GM12878 (cell line): ENCODE measurements at regions of chr19 and their contacts with region 1.

Region 1: GRCh38 chr19:18203863-18204393 is at the start of gene RAB3A:
- DNase-seq: peak; percentile 99
- ATAC-seq: peak; percentile 97
- H3K4me3 ChIP-seq: peak within 1 kb of the TSS; percentile 86
- H3K27ac ChIP-seq: peak within 1 kb of the TSS; percentile 68
- H3K4me1 ChIP-seq: peaks cover 6% of the 10 kb centered on the region
- H3K27me3 ChIP-seq: no peaks in the 10 kb centered on the region
- CTCF ChIP-seq: no peak
- EP300 ChIP-seq: no peak
- POLR2A ChIP-seq: peak; percentile 47; the same call in 1 of the 2 replicates
- RAD21 ChIP-seq: no peak
- polyA plus RNA-seq, gene RAB3A: 0.07 TPM in 1 of 2 experiments, not detected in the other

Region 2: DNA sequence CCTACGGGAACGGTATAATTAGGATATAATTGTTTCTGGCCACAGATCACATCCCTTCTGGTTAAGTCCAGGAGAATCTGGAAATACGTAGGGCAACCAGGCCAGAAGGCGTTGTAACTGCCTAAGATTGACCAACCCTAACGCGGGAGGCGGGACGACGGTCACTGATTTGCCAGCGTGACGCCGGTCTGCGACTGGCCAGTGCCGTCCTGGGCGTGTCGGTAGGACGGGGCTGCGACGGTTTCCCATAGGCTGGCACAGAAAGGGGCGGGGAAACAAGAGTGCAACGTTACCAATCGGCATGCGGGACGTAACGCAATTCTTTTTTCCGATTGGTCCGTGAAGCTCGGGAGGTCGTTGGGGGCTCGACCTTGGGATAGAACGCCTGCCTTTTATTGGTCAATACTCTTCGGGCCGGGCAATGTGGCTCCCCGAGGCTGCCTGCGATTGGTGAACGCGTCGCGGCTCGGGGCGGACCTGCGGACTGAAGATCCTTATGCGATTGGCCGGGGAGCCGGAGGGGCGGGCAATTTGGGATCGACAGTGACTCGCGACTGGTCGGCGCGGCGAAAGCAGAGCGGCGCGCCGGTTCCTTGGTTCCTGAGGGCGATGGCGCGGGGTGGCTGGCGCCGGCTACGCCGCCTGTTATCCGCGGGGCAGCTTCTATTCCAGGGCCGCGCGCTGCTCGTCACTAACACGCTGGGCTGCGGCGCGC is 11.1 kb before region 1 on chr19 and contains the start of gene MPV17L2:
- CTCF ChIA-PET with region 1: interaction called, 30 read pairs
- POLR2A ChIA-PET with region 1: interaction called, 17 read pairs
- RAD21 ChIA-PET with region 1: interaction called, 26 read pairs
- SMC1A ChIA-PET with region 1: interaction called, 7 read pairs
- in situ Hi-C with region 1: no loop called
- intact Hi-C with region 1: no loop called
- DNase-seq: peak; percentile 100
- ATAC-seq: peak; percentile 94
- H3K4me3 ChIP-seq: peak within 1 kb of the TSS; percentile 79
- H3K27ac ChIP-seq: peak within 1 kb of the TSS; percentile 65
- H3K4me1 ChIP-seq: peaks cover 11% of the 10 kb centered on the region
- H3K27me3 ChIP-seq: no peaks in the 10 kb centered on the region
- CTCF ChIP-seq: no peak
- EP300 ChIP-seq: 0 out of 4 replicates have a peak, but pooled peaks of 1 of the 2 experiments have one; percentile 8
- POLR2A ChIP-seq: peak; percentile 72
- RAD21 ChIP-seq: no peak
- polyA plus RNA-seq, gene MPV17L2: 5.1 to 7.7 TPM

Region 3: DNA sequence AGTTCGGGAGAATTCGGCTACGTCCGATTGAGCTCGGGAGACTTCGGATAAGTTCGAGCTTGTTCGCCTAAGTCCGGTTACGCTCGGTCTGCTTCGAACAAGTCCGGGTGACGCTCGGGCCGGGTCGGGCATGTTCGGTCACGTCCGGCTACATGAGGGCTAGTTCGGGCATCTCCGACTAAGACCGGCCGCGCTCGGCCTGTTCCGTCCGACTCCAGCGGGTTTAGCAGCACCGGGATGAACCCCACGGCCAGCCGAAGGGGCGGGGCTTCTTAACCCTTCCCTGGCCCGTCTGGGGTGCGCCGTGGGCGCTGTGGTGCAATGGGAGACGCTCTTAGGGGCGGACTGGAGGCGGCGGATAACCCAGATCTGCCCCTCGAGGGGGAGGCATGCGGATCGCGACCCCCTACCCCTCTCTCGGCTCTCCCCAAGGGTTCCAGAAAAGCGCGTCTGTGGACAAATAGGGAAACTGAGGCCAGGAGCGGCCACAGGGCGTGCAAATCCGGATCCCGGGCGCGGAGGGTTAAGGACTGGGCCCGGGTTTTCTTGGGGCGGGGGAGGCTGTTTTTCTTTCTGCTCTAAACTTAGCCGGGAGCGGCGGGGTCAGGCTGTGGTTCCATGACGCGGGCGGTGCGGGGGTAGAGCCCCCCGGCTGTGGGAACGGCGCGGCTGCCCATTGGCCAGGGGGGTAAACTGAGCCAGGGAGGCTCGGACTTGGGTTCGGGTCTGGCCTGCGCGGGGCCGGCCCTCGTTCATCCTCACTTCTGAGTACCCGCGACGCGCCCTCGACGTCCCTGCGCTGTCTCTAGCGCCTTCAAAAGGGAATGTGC is 20.8 kb after region 1 on chr19:
- CTCF ChIA-PET with region 1: interaction called, 7 read pairs
- POLR2A ChIA-PET with region 1: interaction called, 9 read pairs
- RAD21 ChIA-PET with region 1: interaction called, 11 read pairs
- SMC1A ChIA-PET with region 1: interaction called, 6 read pairs
- in situ Hi-C with region 1: no loop called
- intact Hi-C with region 1: no loop called
- DNase-seq: peak; percentile 80
- ATAC-seq: peak; percentile 99
- H3K4me3 ChIP-seq: peak overlapping the region; percentile 18; the same call in 1 of the 2 replicates
- H3K27ac ChIP-seq: no peak overlapping the region
- H3K4me1 ChIP-seq: peaks cover 19% of the 10 kb centered on the region
- H3K27me3 ChIP-seq: peaks cover 0 to 7% of the 10 kb centered on the region in 2 experiments; a peak in 3 of 4 replicates
- CTCF ChIP-seq: no peak
- EP300 ChIP-seq: no peak
- POLR2A ChIP-seq: no peak
- RAD21 ChIP-seq: no peak

Region 4: DNA sequence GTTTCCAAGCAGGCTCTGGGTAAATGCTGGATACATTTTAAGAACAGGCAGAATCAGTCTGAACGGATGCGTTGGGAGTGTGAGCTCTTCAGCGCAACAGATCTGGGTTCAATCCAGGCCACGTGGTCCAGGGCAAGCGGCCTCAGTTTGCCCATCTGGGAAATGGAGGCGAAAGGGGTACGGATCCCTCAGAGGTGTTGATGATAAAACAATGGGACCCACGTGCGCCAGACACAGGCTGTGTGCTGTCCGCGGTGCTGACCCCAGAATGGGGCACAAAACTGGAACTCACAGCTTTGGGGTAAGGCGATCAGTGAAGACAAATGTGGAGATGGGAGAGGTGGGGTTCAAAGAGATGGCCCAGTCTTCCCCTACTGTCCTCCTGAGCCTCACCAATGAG is 35.4 kb after region 1 on chr19:
- CTCF ChIA-PET with region 1: interaction called, 14 read pairs
- POLR2A ChIA-PET with region 1: interaction called, 4 read pairs
- RAD21 ChIA-PET with region 1: interaction called, 3 read pairs
- SMC1A ChIA-PET with region 1: no interaction called
- in situ Hi-C with region 1: no loop called
- intact Hi-C with region 1: no loop called
- DNase-seq: no peak
- ATAC-seq: no peak
- H3K4me3 ChIP-seq: no peak overlapping the region
- H3K27ac ChIP-seq: no peak overlapping the region
- H3K4me1 ChIP-seq: no peaks in the 10 kb centered on the region
- H3K27me3 ChIP-seq: no peaks in the 10 kb centered on the region; a peak in 2 of 4 replicates
- CTCF ChIP-seq: no peak
- EP300 ChIP-seq: no peak
- POLR2A ChIP-seq: no peak
- RAD21 ChIP-seq: no peak

Region 5: GRCh38 chr19:18245297-18245696 is 41.4 kb after region 1 on chr19:
- CTCF ChIA-PET with region 1: interaction called, 213 read pairs
- POLR2A ChIA-PET with region 1: interaction called, 4 read pairs
- RAD21 ChIA-PET with region 1: interaction called, 175 read pairs
- SMC1A ChIA-PET with region 1: interaction called, 121 read pairs
- in situ Hi-C with region 1: loop called (anchors 5 kb)
- intact Hi-C with region 1: no loop called
- DNase-seq: no peak
- ATAC-seq: no peak
- H3K4me3 ChIP-seq: no peak overlapping the region
- H3K27ac ChIP-seq: no peak overlapping the region
- H3K4me1 ChIP-seq: no peaks in the 10 kb centered on the region
- H3K27me3 ChIP-seq: no peaks in the 10 kb centered on the region; a peak in 1 of 4 replicates
- CTCF ChIP-seq: no peak
- EP300 ChIP-seq: no peak
- POLR2A ChIP-seq: no peak
- RAD21 ChIP-seq: no peak

Region 6: GRCh38 chr19:18419195-18419698 is 215.3 kb after region 1 on chr19 and contains the start of gene SSBP4:
- CTCF ChIA-PET with region 1: interaction called, 3 read pairs
- POLR2A ChIA-PET with region 1: interaction called, 4 read pairs
- RAD21 ChIA-PET with region 1: interaction called, 3 read pairs
- SMC1A ChIA-PET with region 1: no interaction called
- in situ Hi-C with region 1: no loop called
- intact Hi-C with region 1: loop called (anchors 10 kb)
- DNase-seq: no peak
- ATAC-seq: peak; percentile 37
- H3K4me3 ChIP-seq: peak within 1 kb of the TSS; percentile 87
- H3K27ac ChIP-seq: peak within 1 kb of the TSS; percentile 72
- H3K4me1 ChIP-seq: peaks cover 70% of the 10 kb centered on the region
- H3K27me3 ChIP-seq: no peaks in the 10 kb centered on the region
- CTCF ChIP-seq: peak in 2 of 3 experiments; percentile 14 to 34; a peak in 2 of 6 replicates
- EP300 ChIP-seq: peak in 1 of 2 experiments; percentile 36; a peak in 1 of 4 replicates
- POLR2A ChIP-seq: no peak
- RAD21 ChIP-seq: no peak
- polyA plus RNA-seq, gene SSBP4: 0.37 to 6.6 TPM